Body of pancreas (tissue), 4 donors: ENCODE measurements at regions of chr1 and their contacts with region 1.

Region 1: GRCh38 chr1:160085686-160086455 is 4.5 kb downstream of the KCNJ9 start:
- DNase-seq: peak; percentile 77 to 87 (median 81)
- ATAC-seq: peak; percentile 43
- H3K4me3 ChIP-seq: no peak overlapping the region
- H3K27ac ChIP-seq: no peak overlapping the region
- H3K4me1 ChIP-seq: peaks cover 15% of the 10 kb centered on the region
- H3K27me3 ChIP-seq: peaks cover 0 to 8% of the 10 kb centered on the region in 2 donors
- CTCF ChIP-seq: peak; percentile 65 to 86 (median 76)
- POLR2A ChIP-seq: no peak

Region 2: DNA sequence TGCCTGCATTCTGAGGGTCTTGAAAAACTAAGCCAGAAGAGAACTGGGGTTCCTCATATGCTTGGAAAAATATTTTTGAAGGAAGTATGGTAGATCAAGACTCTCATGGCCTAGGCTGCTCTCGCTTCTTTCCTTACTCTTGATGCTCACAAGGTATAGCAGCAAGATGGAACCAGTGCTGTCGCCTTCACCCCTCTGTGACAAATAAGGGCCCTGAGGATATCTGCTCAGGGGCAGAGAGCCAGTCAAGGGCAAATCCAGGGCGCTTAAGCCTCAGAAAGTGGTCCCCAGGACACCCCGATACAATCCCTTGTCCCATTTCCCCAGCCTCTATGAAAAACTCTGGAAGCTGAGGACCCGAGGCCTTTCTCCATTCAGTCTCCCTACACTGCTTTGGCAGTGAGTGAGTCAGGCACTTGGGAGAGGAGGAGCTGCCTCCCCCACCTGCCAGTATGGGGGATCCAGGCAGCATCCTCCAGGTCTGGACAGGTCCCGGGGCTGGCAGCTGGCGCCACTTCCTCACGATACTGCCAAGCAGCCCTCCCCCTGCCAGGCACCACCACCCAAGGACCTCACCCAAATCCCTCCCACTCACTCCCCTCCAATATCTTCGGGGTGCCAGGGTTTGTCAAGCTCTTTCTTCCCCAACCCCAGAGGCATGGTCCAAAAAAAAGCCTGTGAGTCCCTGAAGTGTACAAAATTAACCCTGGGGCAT is 141.8 kb before region 1 on chr1:
- intact Hi-C with region 1: loop called (anchors 5 kb)
- DNase-seq: no peak
- ATAC-seq: no peak
- H3K4me3 ChIP-seq: no peak overlapping the region
- H3K27ac ChIP-seq: no peak overlapping the region
- H3K4me1 ChIP-seq: peaks cover 21% of the 10 kb centered on the region
- H3K27me3 ChIP-seq: no peaks in the 10 kb centered on the region
- CTCF ChIP-seq: no peak
- POLR2A ChIP-seq: no peak

Region 3: GRCh38 chr1:160053548-160054365 is 32.1 kb before region 1 on chr1:
- intact Hi-C with region 1: loop called (anchors 5 kb)
- DNase-seq: no peak
- ATAC-seq: no peak
- H3K4me3 ChIP-seq: no peak overlapping the region
- H3K27ac ChIP-seq: no peak overlapping the region
- H3K4me1 ChIP-seq: no peaks in the 10 kb centered on the region
- H3K27me3 ChIP-seq: no peaks in the 10 kb centered on the region
- CTCF ChIP-seq: no peak
- POLR2A ChIP-seq: no peak